Activated T-helper 1 cell treated with anti-CD3 and anti-CD28 coated beads, Interleukin-12 subunit alpha, Interleukin-12 subunit beta, Interleukin-2, Interleukin-4 antibody, amounts not matched to agents 30 ng/mL and 10 ng/mL and 1 ng/mL, durations not matched to agents 14 hours and 24 hours and 36 hours (primary cell): ENCODE measurements at regions of chr16 and their contacts with region 1.

Region 1: DNA sequence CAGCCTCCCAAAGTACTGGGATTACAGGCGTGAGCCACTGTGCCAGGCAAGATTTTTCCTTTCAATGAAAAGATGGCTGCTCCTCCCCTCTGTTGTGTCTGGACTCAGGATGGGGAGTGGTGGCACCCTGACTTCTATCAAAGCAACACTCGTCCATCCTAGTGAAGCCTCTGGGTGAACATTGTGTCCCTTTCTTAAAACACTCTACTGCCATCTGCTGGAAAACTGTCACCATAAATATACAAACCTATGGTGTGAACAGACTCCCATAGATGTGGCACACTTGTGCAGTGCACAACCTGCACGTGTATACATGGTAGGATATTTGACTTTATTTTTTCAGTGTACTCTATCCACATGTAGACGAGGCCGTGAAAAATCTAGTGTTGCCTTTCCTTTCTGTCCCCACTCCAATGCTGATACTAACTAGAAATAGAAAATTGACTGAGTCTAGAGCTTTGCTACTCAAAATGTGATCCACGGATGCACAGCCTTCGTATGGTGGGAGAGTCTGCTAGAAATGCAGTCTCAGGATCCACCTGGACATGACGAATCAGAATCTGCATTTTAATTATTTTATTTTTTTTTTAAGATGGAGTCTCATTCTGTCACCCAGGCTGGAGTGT is 55.9 kb upstream of the PLCG2 start:
- DNase-seq: peak; percentile 30
- H3K4me3 Mint-ChIP-seq: no peak overlapping the region
- H3K27ac Mint-ChIP-seq: no peak overlapping the region
- H3K4me1 Mint-ChIP-seq: peaks cover 21% of the 10 kb centered on the region
- H3K27me3 Mint-ChIP-seq: peaks cover 12% of the 10 kb centered on the region

Region 2: GRCh38 chr16:81204798-81205680 is 518.2 kb before region 1 on chr16:
- intact Hi-C with region 1: loop called (anchors 1 kb)
- DNase-seq: peak; percentile 10
- H3K4me3 Mint-ChIP-seq: no peak overlapping the region
- H3K27ac Mint-ChIP-seq: no peak overlapping the region
- H3K4me1 Mint-ChIP-seq: no peaks in the 10 kb centered on the region
- H3K27me3 Mint-ChIP-seq: peaks cover 11% of the 10 kb centered on the region

Region 3: GRCh38 chr16:81238296-81239011 is 484.8 kb before region 1 on chr16 and contains the start of gene BCO1:
- intact Hi-C with region 1: no loop called
- DNase-seq: no peak
- H3K4me3 Mint-ChIP-seq: peak within 1 kb of the TSS; percentile 15
- H3K27ac Mint-ChIP-seq: no peak within 1 kb of the TSS
- H3K4me1 Mint-ChIP-seq: peaks cover 6% of the 10 kb centered on the region
- H3K27me3 Mint-ChIP-seq: peaks cover 2% of the 10 kb centered on the region
- total RNA-seq, gene BCO1: not detected in 2 replicates

Region 4: DNA sequence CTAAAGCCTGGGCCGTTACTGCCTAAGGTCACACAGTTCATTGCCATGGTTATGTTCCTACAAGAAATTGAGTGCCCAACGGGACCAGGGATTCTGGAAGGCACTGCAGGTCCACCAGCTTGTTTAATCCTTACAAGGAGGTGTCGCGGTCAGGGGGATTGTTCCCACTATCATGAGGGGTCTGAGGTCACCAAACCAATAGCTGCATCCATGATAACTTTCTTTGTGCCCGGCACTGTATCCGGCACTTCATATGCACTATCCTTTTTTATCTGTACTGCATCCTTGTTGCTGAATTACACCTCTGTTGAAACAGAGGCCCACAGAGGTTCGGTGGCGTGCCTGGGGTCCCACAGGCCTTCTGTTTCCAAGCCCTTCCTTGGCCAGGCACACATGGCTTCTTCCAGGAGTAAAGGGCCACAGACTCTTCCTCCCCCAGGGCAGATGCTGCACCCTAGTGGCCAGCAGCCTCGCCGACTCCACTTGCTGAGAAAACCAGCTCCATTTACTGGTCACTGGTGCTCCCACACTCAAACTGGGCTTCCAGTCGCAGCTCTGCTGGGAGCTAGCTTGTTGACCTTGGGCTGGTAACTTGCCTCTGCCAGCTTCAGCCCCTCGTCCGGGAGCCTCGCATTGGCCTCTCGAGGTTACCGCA is 26.1 kb before region 1 on chr16:
- intact Hi-C with region 1: no loop called
- DNase-seq: peak; percentile 37
- H3K4me3 Mint-ChIP-seq: no peak overlapping the region
- H3K27ac Mint-ChIP-seq: peak overlapping the region; percentile 23
- H3K4me1 Mint-ChIP-seq: peaks cover 13% of the 10 kb centered on the region
- H3K27me3 Mint-ChIP-seq: no peaks in the 10 kb centered on the region